IMR-90 (cell line): ENCODE measurements at regions of chrX and their contacts with region 1.

Region 1: DNA sequence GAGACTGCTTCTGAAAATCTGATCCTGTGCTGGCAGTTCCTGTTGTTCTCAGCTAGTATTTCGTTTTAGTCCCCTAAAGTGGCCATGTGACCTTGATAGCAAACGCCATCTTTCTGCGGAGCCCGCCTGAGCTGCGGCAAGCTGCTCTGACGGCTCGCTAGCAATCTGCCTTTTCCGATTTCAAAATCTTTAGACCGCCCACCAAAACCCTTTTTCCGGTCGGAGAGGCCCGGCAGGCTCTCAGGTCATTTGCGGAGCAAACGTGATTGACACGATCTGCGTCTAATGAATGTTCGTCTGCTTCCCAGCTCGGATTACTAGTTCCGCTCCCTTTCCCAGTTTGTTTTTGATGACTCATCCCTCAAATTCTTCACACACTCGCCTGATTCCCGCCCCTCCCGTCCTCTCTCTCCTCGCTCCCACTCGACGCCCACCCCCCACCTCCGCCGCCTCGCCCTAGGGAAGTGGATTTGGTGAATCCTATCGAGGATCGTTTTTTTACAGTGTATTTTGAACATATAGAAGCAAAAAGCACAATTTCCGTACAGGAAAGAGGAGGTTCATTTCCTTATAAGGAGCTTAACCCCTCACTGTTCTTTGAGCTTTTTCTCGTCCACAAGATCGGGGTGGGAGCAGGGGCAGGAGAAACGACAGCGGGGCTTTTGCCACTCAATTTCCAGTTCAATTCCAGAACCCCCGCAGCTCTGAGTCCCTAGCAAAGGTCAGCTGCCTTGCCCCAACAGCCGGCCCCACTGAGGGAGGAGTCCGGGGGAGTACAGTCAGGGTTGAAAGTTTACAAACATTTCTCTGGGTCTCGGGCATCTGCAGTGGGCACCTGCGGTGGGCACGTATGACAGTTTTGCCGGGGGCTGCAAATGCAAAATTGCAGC is 37.5 kb downstream of the NLGN3 start:
- DNase-seq: peak; percentile 96
- ATAC-seq: peak; percentile 88
- H3K4me3 ChIP-seq: peak overlapping the region; percentile 41
- H3K27ac ChIP-seq: peak overlapping the region; percentile 82
- H3K4me1 ChIP-seq: peaks cover 4% of the 10 kb centered on the region; the same call in 1 of the 2 replicates
- H3K27me3 ChIP-seq: peaks cover 2% of the 10 kb centered on the region; the same call in 1 of the 2 replicates
- CTCF ChIP-seq: no peak
- POLR2A ChIP-seq: peak; percentile 83
- RAD21 ChIP-seq: no peak

Region 2: DNA sequence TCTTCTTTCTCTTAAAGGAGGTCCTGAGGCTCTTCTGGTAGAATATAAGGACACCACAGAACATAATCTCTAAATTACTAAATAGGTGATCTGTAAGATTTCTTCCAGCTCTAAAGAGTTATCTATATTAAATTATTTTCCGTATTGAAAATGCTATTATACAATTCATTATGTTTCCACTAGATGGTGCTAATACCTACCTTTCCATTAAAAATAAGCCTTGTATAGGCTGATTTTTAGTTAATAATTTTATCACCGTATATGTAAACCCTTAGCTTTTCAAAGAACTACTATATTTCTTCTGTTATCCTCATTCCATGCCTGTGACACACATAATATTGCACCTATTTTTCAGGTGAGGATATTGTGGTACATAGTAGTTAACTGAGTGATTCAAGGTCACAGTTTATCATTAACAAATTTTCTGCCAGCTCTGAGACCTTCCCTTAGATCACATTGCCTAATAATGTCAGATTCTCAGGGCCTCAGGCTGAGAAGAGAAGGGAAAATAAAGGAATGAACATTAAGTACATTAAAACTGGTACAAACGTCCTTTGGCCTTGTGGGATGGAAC is 412.4 kb before region 1 on chrX:
- CTCF ChIA-PET with region 1: no interaction called
- POLR2A ChIA-PET with region 1: no interaction called
- dilution Hi-C with region 1: no loop called
- in situ Hi-C with region 1: loop called (anchors 5 kb)
- intact Hi-C with region 1: loop called (anchors 1 kb)
- DNase-seq: peak; percentile 5
- ATAC-seq: no peak
- H3K4me3 ChIP-seq: no peak overlapping the region
- H3K27ac ChIP-seq: no peak overlapping the region
- H3K4me1 ChIP-seq: no peaks in the 10 kb centered on the region
- H3K27me3 ChIP-seq: no peaks in the 10 kb centered on the region; the same call in 1 of the 2 replicates
- CTCF ChIP-seq: peak; percentile 52
- POLR2A ChIP-seq: no peak
- RAD21 ChIP-seq: peak; percentile 47

Region 3: GRCh38 chrX:70970482-70970995 is 211.6 kb before region 1 on chrX:
- CTCF ChIA-PET with region 1: interaction called, 3 read pairs
- POLR2A ChIA-PET with region 1: no interaction called
- dilution Hi-C with region 1: no loop called
- in situ Hi-C with region 1: no loop called
- intact Hi-C with region 1: loop called (anchors 1 kb)
- DNase-seq: peak; percentile 16
- ATAC-seq: peak; percentile 35; the same call in 1 of the 2 replicates
- H3K4me3 ChIP-seq: no peak overlapping the region
- H3K27ac ChIP-seq: no peak overlapping the region
- H3K4me1 ChIP-seq: no peaks in the 10 kb centered on the region
- H3K27me3 ChIP-seq: 0 out of 2 replicates have a peak, but pooled peaks cover 1% of the 10 kb centered on the region
- CTCF ChIP-seq: peak; percentile 38
- POLR2A ChIP-seq: no peak
- RAD21 ChIP-seq: peak; percentile 47

Region 4: GRCh38 chrX:70998411-70999027 is 183.6 kb before region 1 on chrX:
- CTCF ChIA-PET with region 1: interaction called, 3 read pairs
- POLR2A ChIA-PET with region 1: no interaction called
- dilution Hi-C with region 1: no loop called
- in situ Hi-C with region 1: no loop called
- intact Hi-C with region 1: loop called (anchors 1 kb)
- DNase-seq: peak; percentile 47
- ATAC-seq: peak; percentile 82
- H3K4me3 ChIP-seq: no peak overlapping the region
- H3K27ac ChIP-seq: no peak overlapping the region
- H3K4me1 ChIP-seq: no peaks in the 10 kb centered on the region
- H3K27me3 ChIP-seq: peaks cover 8% of the 10 kb centered on the region
- CTCF ChIP-seq: peak; percentile 50
- POLR2A ChIP-seq: no peak
- RAD21 ChIP-seq: peak; percentile 57

Region 5: GRCh38 chrX:71254092-71254941 is 72.2 kb after region 1 on chrX and contains the start of gene ZMYM3:
- CTCF ChIA-PET with region 1: no interaction called
- POLR2A ChIA-PET with region 1: no interaction called
- dilution Hi-C with region 1: no loop called
- in situ Hi-C with region 1: no loop called
- intact Hi-C with region 1: loop called (anchors 2 kb)
- DNase-seq: peak; percentile 76
- ATAC-seq: peak; percentile 89
- H3K4me3 ChIP-seq: peak within 1 kb of the TSS; percentile 100
- H3K27ac ChIP-seq: peak within 1 kb of the TSS; percentile 98
- H3K4me1 ChIP-seq: peaks cover 8% of the 10 kb centered on the region
- H3K27me3 ChIP-seq: no peaks in the 10 kb centered on the region
- CTCF ChIP-seq: no peak
- POLR2A ChIP-seq: no peak
- RAD21 ChIP-seq: no peak
- total RNA-seq, gene ZMYM3: 8.3 and 10.0 TPM in 2 replicates

Region 6: GRCh38 chrX:71283403-71284143 is 101.4 kb after region 1 on chrX and contains the start of gene NONO:
- CTCF ChIA-PET with region 1: no interaction called
- POLR2A ChIA-PET with region 1: no interaction called
- dilution Hi-C with region 1: no loop called
- in situ Hi-C with region 1: no loop called
- intact Hi-C with region 1: loop called (anchors 2 kb)
- DNase-seq: peak; percentile 99
- ATAC-seq: peak; percentile 84
- H3K4me3 ChIP-seq: peak within 1 kb of the TSS; percentile 90
- H3K27ac ChIP-seq: peak within 1 kb of the TSS; percentile 98
- H3K4me1 ChIP-seq: no peaks in the 10 kb centered on the region
- H3K27me3 ChIP-seq: no peaks in the 10 kb centered on the region
- CTCF ChIP-seq: 0 out of 2 replicates have a peak, but pooled peaks have one; percentile 23
- POLR2A ChIP-seq: peak; percentile 89
- RAD21 ChIP-seq: no peak
- total RNA-seq, gene NONO: 444 and 609 TPM in 2 replicates

Region 7: DNA sequence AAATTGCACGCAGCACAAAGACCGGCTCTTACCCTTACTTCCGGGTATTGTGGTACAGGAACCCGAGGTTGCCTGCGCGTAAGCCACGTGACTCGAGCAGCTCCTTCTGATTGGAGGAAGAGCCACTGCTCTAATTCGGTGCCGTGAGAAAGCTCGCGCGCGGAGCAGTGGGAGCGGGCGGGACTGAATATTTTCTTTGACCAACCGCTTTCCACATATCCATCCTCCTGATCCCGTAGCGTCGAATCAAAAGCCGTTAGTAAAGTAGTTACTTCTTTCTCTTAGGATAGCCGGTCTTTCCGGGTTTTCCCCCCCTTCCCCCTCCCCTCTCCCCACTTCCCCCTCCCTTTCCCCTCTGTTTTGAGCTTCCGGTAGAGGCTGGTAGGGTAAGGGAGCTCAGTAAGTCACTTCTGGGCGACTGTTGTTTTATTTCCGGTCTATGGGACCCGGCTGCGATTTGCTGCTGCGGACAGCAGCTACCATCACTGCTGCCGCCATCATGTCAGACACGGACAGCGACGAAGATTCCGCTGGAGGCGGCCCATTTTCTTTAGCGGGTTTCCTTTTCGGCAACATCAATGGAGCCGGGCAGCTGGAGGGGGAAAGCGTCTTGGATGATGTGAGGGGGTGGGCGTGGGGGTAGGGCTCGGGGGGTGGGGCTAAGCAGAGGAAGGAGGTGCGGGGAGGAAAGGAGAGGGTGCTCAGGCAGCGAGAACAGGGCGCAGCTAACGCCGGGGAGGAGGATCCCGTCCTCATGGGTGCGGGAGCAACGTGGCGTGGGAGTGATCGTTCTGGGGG is 183.9 kb after region 1 on chrX and contains the start of gene TAF1:
- CTCF ChIA-PET with region 1: no interaction called
- POLR2A ChIA-PET with region 1: interaction called, 3 read pairs
- dilution Hi-C with region 1: no loop called
- in situ Hi-C with region 1: no loop called
- intact Hi-C with region 1: loop called (anchors 1 kb)
- DNase-seq: peak; percentile 97
- ATAC-seq: peak; percentile 89
- H3K4me3 ChIP-seq: peak within 1 kb of the TSS; percentile 91
- H3K27ac ChIP-seq: peak within 1 kb of the TSS; percentile 95
- H3K4me1 ChIP-seq: no peaks in the 10 kb centered on the region; the same call in 1 of the 2 replicates
- H3K27me3 ChIP-seq: no peaks in the 10 kb centered on the region
- CTCF ChIP-seq: no peak
- POLR2A ChIP-seq: peak; percentile 68; the same call in 1 of the 2 replicates
- RAD21 ChIP-seq: no peak
- total RNA-seq, gene TAF1: 25.5 and 36.1 TPM in 2 replicates